ENCODE measurements at regions of chr11 and their contacts with region 1.

Region 1: DNA sequence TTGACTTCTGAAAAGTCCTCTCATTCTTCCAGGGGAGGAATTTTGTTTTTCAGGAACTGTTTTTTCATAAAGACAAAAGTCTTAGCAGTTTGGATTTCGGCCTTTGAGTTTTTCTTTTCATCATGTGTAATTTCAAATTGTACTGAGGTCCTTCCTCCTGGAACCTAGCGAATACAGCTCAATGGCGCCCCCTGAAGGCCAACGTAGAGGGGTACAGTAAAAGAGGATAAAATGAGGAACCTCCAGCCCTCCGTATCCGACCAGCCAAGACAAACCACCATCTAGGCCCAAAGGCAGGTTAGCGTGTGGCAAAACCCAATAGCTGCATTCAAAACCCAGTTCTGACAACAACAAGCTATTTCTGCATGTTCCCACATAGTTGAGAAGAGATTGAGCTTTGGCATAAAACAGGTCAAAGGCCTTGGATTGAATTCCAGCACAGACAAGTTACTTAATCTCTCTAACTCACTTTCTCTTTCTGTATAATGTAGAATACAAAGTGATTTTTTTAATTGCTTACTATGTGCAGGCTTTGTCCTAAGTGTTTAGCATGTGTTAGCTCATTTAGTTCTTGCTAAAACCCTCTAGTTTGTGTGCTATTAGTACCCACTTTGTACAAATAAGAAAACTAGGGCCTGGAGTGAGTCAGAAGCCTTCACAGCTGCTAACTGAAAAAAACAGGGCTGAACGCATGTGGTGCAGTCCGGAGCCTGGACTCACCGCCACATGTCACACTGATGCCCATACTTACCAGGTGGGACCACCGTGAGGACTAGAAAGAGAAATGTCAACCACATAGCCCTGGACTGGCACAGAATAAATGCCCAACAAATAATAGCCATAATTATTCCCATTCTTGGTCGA is 43.2 kb upstream of the ETS1 start:
- DNase-seq: peak; percentile 89
- H3K4me3 ChIP-seq: no peak overlapping the region
- H3K27ac ChIP-seq: peak overlapping the region; percentile 22
- H3K4me1 ChIP-seq: peaks cover 8% of the 10 kb centered on the region
- H3K27me3 ChIP-seq: no peaks in the 10 kb centered on the region
- CTCF ChIP-seq: peak; percentile 71 to 84
- POLR2A ChIP-seq: no peak

Region 2: DNA sequence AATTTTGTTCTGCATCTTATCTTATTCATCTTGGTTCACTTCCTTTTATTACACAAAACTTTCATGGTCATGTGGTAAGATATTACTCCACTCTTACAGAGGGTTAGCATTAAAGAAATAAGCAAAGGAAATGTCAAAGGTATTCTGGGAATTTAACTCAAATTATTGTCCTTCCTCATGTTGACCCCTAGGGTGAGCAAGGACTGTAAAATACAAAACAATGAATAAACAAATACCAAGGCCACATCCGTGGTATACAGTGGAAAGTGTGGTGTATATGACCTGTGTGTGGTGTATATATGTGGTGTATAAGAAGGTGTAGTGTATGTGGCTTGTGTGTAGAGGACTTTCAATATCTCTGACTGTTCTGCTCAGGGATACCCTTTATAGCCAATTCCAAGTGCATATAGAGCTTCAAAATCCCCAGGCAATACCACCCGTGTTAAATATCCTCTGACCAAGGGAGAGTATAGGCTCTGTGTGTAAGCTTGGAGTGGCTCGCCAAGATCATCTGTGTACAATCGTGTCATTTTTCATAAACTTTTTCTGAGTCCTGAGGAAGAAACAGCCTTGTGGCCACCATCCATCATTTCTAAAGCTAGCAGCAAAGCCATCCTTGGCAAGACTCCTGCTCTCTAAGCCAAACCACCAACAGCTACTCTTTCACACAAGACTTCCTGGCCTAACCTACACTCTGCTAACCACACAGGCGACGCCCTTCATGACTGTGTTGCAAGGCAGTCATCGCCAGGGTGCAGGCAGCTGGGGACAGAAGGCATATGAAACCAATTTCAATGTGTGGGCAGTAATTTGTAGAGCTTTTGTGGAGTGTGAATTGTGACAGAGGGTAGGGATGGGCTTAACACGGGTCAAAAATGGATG is 591.2 kb before region 1 on chr11:
- CTCF ChIA-PET with region 1: no interaction called
- POLR2A ChIA-PET with region 1: no interaction called
- dilution Hi-C with region 1: loop called (anchors 25 kb)
- intact Hi-C with region 1: no loop called
- DNase-seq: peak; percentile 74
- H3K4me3 ChIP-seq: no peak overlapping the region
- H3K27ac ChIP-seq: no peak overlapping the region
- H3K4me1 ChIP-seq: peaks cover 14% of the 10 kb centered on the region
- H3K27me3 ChIP-seq: no peaks in the 10 kb centered on the region
- CTCF ChIP-seq: no peak
- POLR2A ChIP-seq: no peak

Region 3: DNA sequence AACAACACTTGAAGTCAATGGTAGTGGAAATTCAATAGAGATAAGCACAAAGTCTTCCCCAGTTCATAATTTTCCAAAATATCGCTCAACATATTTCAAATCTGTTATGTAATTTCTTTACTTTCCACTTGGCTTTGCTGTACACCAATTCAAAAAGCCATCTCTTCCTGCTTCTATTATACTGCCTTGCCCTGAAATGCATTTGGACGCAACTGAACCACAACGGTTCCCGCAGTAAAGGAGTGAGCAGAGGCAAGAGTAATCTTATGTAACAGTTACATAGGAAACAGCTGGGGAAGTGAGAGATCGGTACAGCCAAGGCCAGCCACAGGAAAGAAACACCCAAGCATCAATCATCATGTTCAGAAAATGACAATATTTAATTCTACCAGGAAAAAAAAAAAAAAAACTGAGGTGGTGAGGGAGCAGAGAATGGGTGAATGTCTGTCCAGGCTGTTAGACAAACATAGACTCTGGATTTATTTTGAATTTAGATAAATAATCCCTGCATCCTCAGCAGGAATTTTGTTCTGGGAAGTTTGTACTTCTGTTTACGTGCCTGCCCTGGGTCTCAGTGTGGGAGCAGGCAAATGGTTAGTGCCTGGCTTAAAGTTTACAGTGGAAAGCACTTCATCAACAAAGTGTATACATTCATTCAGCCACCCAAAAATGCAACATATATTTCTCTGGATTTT is 435.4 kb before region 1 on chr11:
- CTCF ChIA-PET with region 1: interaction called, 8 read pairs
- POLR2A ChIA-PET with region 1: no interaction called
- dilution Hi-C with region 1: no loop called
- intact Hi-C with region 1: loop called (anchors 1 kb)
- DNase-seq: peak; percentile 98
- H3K4me3 ChIP-seq: no peak overlapping the region
- H3K27ac ChIP-seq: peak overlapping the region; percentile 65
- H3K4me1 ChIP-seq: peaks cover 12% of the 10 kb centered on the region
- H3K27me3 ChIP-seq: no peaks in the 10 kb centered on the region
- CTCF ChIP-seq: peak in 1 of 2 donors; percentile 9
- POLR2A ChIP-seq: peak; percentile 60

Region 4: DNA sequence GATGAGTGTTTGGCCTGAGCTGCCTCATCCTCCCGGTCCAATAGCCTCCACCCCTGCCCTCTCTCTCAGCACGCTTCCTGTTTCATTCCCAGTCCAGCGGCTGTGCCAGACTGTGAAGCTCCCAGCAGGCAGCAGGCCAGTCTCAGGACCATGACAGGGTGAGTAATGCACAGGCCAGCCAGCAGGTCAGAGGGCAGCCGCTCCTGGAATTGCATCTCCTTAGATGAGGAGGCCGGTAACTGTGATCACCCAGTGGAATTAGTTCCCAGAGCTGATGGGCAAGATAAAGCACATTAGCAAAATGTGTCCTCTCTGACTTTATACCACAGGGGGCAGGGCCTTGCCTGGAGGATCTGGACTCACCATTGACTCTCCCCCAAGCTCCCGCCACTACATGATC is 294.4 kb before region 1 on chr11:
- CTCF ChIA-PET with region 1: interaction called, 6 read pairs
- POLR2A ChIA-PET with region 1: no interaction called
- dilution Hi-C with region 1: no loop called
- intact Hi-C with region 1: loop called (anchors 1 kb)
- DNase-seq: peak; percentile 88
- H3K4me3 ChIP-seq: no peak overlapping the region
- H3K27ac ChIP-seq: peak overlapping the region; percentile 87
- H3K4me1 ChIP-seq: peaks cover 43% of the 10 kb centered on the region
- H3K27me3 ChIP-seq: no peaks in the 10 kb centered on the region
- CTCF ChIP-seq: no peak
- POLR2A ChIP-seq: peak; percentile 17

Region 5: DNA sequence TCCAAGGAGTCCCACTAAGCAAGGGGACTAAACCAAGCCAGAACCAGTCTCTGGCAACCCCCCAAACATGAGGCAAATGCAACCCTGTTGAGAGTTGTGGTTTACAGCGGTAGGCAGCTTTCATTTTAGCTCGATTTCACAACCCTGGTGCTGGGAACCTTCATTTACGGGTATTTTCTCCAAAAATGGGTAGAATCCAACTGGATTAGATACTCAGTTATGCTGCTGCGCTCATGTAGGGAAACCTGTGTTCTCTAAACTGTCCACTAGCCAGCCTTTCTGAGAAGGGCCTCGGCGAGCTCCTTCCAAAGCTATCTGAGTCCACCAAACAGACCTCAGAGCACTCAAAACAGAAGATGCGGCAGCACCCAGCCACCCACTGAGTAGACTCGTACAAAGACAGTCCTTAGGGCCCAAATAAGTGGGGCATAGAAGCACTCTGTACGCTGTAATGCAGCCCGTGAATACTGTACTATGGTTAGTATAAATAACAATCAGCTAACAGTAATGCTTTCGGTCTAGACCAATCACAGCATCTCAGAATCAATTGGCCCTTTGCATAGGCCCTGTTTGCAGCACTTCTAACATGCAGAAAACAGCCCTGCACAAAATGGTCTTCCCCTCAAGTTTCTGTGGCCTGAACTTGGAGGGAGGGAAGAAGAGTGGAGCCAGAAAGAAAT is 147.9 kb before region 1 on chr11:
- CTCF ChIA-PET with region 1: interaction called, 25 read pairs
- POLR2A ChIA-PET with region 1: no interaction called
- dilution Hi-C with region 1: no loop called
- intact Hi-C with region 1: no loop called
- DNase-seq: no peak
- H3K4me3 ChIP-seq: no peak overlapping the region
- H3K27ac ChIP-seq: peak overlapping the region; percentile 4
- H3K4me1 ChIP-seq: peaks cover 4% of the 10 kb centered on the region
- H3K27me3 ChIP-seq: no peaks in the 10 kb centered on the region
- CTCF ChIP-seq: no peak
- POLR2A ChIP-seq: no peak

Region 6: DNA sequence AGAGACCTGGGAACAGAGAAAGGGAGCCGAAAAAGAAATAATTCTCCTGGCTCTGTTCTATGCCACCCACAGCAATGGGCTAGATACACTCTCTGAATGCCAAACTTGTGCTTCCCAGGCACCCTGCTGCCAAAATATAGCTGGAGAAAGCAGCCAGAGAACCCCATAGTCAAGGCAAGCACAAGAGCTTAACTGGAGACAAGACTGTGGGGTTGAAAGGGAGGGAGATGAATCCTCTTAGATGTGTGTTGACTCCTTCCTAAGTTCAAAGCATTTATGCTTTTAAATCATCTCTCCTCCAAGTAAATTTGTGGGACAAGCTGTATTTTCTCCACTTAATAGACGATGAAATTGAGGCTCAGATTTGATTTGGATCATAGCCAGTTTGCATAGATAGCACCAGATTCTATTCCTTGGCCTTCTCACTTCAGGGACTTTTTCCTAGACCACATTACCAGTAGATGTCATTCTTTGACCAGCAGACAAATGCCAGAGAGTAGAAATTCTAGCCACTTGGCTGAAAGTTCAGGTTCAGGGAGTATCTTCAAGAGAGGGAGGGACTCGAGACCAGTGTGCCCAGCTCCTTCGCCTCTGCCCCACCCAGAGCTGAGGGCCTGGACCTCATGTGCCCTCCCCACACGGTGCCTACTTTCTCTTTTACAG is 26.7 kb before region 1 on chr11:
- CTCF ChIA-PET with region 1: no interaction called
- POLR2A ChIA-PET with region 1: no interaction called
- dilution Hi-C with region 1: no loop called
- intact Hi-C with region 1: no loop called
- DNase-seq: no peak
- H3K4me3 ChIP-seq: no peak overlapping the region
- H3K27ac ChIP-seq: no peak overlapping the region
- H3K4me1 ChIP-seq: no peaks in the 10 kb centered on the region
- H3K27me3 ChIP-seq: peaks cover under 1 to 12% of the 10 kb centered on the region in 2 experiments
- CTCF ChIP-seq: no peak
- POLR2A ChIP-seq: no peak

Region 7: DNA sequence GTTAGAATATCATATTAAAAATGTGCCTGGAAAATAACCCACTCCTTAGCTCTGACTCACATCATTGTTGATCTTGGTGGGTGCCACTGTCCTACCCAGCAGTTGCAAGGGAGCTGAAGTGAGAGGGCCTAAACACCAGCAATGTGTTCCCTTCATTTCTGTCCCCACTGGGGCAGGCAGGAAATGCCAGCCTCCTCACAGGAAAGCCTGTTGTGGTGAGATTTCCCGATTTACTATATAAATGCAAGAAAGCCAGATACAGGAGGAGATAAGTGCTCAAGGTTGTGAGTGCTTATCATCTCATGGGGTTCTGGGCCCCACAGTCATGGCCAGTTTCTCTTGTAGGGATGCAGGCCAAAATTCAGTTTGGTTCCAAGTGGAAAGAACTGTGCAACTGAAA is 47.4 kb after region 1 on chr11:
- CTCF ChIA-PET with region 1: interaction called, 12 read pairs
- POLR2A ChIA-PET with region 1: no interaction called
- dilution Hi-C with region 1: no loop called
- intact Hi-C with region 1: no loop called
- DNase-seq: peak; percentile 90
- H3K4me3 ChIP-seq: no peak overlapping the region
- H3K27ac ChIP-seq: peak overlapping the region; percentile 53
- H3K4me1 ChIP-seq: peaks cover 28% of the 10 kb centered on the region
- H3K27me3 ChIP-seq: no peaks in the 10 kb centered on the region
- CTCF ChIP-seq: no peak
- POLR2A ChIP-seq: peak; percentile 80

Region 8: GRCh38 chr11:128757235-128757711 is 126.7 kb after region 1 on chr11:
- CTCF ChIA-PET with region 1: interaction called, 30 read pairs
- POLR2A ChIA-PET with region 1: no interaction called
- dilution Hi-C with region 1: no loop called
- intact Hi-C with region 1: loop called (anchors 1 kb)
- DNase-seq: peak; percentile 75
- H3K4me3 ChIP-seq: no peak overlapping the region
- H3K27ac ChIP-seq: peak overlapping the region; percentile 21
- H3K4me1 ChIP-seq: peaks cover 19% of the 10 kb centered on the region
- H3K27me3 ChIP-seq: no peaks in the 10 kb centered on the region
- CTCF ChIP-seq: peak; percentile 55 to 61
- POLR2A ChIP-seq: no peak

Measured in endothelial cell of umbilical vein (primary cell).